CD8-positive, alpha-beta T cell (primary cell): ENCODE measurements at regions of chr12 and their contacts with region 1.

Region 1: GRCh38 chr12:87332987-87333726 is 696.0 kb downstream of the C12orf50 start:
- DNase-seq: no peak
- ATAC-seq: no peak
- H3K4me3 ChIP-seq: no peak overlapping the region
- H3K4me3 Mint-ChIP-seq: no peak overlapping the region
- H3K27ac ChIP-seq: no peak overlapping the region
- H3K27ac Mint-ChIP-seq: no peak overlapping the region
- H3K4me1 ChIP-seq: no peaks in the 10 kb centered on the region
- H3K4me1 Mint-ChIP-seq: no peaks in the 10 kb centered on the region
- H3K27me3 ChIP-seq: no peaks in the 10 kb centered on the region
- H3K27me3 Mint-ChIP-seq: no peaks in the 10 kb centered on the region
- CTCF ChIP-seq: no peak

Region 2: GRCh38 chr12:87280356-87280755 is 52.8 kb before region 1 on chr12:
- CTCF ChIA-PET with region 1: no interaction called
- POLR2A ChIA-PET with region 1: no interaction called
- intact Hi-C with region 1: loop called in 1 of 2 experiments (anchors 2 kb)
- DNase-seq: peak in 1 of 9 experiments; percentile 3
- ATAC-seq: no peak
- H3K4me3 ChIP-seq: no peak overlapping the region
- H3K4me3 Mint-ChIP-seq: no peak overlapping the region
- H3K27ac ChIP-seq: no peak overlapping the region
- H3K27ac Mint-ChIP-seq: no peak overlapping the region
- H3K4me1 ChIP-seq: no peaks in the 10 kb centered on the region
- H3K4me1 Mint-ChIP-seq: no peaks in the 10 kb centered on the region
- H3K27me3 ChIP-seq: no peaks in the 10 kb centered on the region
- H3K27me3 Mint-ChIP-seq: no peaks in the 10 kb centered on the region
- CTCF ChIP-seq: no peak